Panc1 (cell line): ENCODE measurements at regions of chr12 and their contacts with region 1.

Region 1: DNA sequence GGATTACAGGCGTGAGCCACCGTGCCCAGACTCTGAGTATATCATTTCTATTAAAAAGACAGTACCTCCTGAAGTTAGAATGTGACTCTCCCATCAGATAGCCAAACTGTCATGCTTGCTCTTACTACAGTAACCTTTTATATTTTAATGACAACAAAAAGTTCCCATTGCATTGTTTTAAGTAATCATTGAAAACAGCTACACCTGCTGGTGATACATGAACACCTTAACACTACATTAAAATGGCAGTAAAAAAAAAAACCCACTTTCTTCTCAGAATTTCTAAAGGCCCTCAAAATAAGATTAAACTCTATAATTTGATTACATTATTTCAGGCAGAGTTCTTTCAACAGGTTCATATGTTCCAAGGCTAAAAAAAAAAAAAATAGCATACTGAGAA is 76.7 kb downstream of the SH2B3 start:
- DNase-seq: no peak
- ATAC-seq: no peak
- H3K4me3 ChIP-seq: no peak overlapping the region
- H3K27ac ChIP-seq: no peak overlapping the region
- H3K4me1 ChIP-seq: no peaks in the 10 kb centered on the region
- H3K27me3 ChIP-seq: no peaks in the 10 kb centered on the region
- CTCF ChIP-seq: no peak

Region 2: DNA sequence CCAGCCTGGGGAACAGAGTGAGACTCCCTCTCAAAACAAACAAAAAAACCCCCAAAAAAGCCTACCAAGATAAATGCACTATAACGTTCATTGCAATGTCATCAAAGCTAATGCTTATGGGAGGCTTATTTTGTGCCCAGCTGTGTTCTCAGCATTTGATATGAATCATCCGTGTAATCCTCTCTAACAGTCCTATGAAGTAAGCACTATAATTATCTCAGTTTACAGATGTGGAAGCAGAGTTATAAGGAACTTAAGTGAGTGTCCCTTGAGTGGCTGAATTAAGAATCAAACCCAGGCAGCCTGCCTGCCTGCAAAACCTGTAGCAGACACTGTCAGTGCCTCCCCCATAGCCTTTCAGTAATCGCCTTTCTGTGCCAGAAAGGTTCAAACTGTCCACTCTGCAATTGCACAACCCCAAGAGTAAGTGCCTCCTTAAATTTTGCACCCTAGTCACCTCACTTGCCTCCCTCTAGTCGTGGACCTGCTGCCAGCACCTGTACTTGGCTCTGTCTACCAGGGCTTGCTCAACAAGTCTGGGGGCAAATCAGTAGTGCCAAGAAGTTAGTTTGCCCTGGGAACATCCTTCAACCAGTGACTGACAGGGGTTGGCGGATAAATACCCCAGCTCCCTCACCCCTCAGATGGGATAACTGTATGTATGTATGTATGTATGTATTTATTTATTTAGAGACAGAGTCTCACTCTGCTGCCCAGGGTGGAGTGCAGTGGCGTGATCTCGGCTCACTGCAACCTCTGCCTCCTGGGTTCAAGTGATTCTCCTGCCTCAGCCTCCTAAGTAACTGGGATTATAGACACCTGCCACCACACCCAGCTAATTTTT is 715.9 kb before region 1 on chr12:
- CTCF ChIA-PET with region 1: no interaction called
- POLR2A ChIA-PET with region 1: no interaction called
- in situ Hi-C with region 1: no loop called
- intact Hi-C with region 1: no loop called
- DNase-seq: no peak
- ATAC-seq: no peak
- H3K4me3 ChIP-seq: no peak overlapping the region
- H3K27ac ChIP-seq: no peak overlapping the region
- H3K4me1 ChIP-seq: no peaks in the 10 kb centered on the region
- H3K27me3 ChIP-seq: no peaks in the 10 kb centered on the region
- CTCF ChIP-seq: no peak

Region 3: GRCh38 chr12:111424189-111424792 is 58.2 kb before region 1 on chr12:
- CTCF ChIA-PET with region 1: no interaction called
- POLR2A ChIA-PET with region 1: no interaction called
- in situ Hi-C with region 1: no loop called
- intact Hi-C with region 1: no loop called
- DNase-seq: no peak
- ATAC-seq: no peak
- H3K4me3 ChIP-seq: no peak overlapping the region
- H3K27ac ChIP-seq: peak overlapping the region; percentile 41
- H3K4me1 ChIP-seq: peaks cover 36% of the 10 kb centered on the region
- H3K27me3 ChIP-seq: no peaks in the 10 kb centered on the region
- CTCF ChIP-seq: no peak

Region 4: DNA sequence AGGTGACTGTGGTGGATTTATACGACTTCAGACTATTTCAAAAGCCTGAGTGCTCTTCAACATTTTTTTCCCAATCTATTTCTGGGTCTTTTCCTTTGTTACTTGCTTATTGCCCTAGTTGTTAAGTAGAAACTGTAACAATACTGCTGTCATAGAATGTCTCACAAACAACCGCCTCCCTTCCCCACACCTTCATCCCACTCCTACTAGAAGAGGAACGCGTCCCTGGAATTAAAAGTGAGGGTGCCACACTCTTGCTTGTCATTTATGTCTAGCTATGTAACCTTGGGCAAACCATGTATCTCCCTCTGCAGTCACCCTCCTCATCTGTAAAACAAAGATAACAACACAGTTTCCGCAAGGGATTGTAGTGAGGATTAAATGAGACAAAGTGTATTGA is 194.7 kb after region 1 on chr12:
- CTCF ChIA-PET with region 1: no interaction called
- POLR2A ChIA-PET with region 1: interaction called, 18 read pairs
- in situ Hi-C with region 1: no loop called
- intact Hi-C with region 1: no loop called
- DNase-seq: no peak
- ATAC-seq: no peak
- H3K4me3 ChIP-seq: no peak overlapping the region
- H3K27ac ChIP-seq: no peak overlapping the region
- H3K4me1 ChIP-seq: no peaks in the 10 kb centered on the region
- H3K27me3 ChIP-seq: no peaks in the 10 kb centered on the region
- CTCF ChIP-seq: no peak